B cell (primary cell): ENCODE measurements at regions of chr20 and their contacts with region 1.

Region 1: GRCh38 chr20:49821870-49822331 is 9.3 kb downstream of the SLC9A8 start:
- DNase-seq: no peak
- ATAC-seq: peak; percentile 36
- H3K4me3 ChIP-seq: no peak overlapping the region
- H3K4me3 Mint-ChIP-seq: peak overlapping the region; percentile 6
- H3K27ac ChIP-seq: peak overlapping the region in 1 of 2 donors; percentile 72
- H3K27ac Mint-ChIP-seq: peak overlapping the region; percentile 29
- H3K4me1 ChIP-seq: peaks cover 26 to 28% of the 10 kb centered on the region in 2 donors
- H3K4me1 Mint-ChIP-seq: peaks cover 34% of the 10 kb centered on the region
- H3K27me3 ChIP-seq: no peaks in the 10 kb centered on the region
- H3K27me3 Mint-ChIP-seq: no peaks in the 10 kb centered on the region
- CTCF ChIP-seq: no peak

Region 2: DNA sequence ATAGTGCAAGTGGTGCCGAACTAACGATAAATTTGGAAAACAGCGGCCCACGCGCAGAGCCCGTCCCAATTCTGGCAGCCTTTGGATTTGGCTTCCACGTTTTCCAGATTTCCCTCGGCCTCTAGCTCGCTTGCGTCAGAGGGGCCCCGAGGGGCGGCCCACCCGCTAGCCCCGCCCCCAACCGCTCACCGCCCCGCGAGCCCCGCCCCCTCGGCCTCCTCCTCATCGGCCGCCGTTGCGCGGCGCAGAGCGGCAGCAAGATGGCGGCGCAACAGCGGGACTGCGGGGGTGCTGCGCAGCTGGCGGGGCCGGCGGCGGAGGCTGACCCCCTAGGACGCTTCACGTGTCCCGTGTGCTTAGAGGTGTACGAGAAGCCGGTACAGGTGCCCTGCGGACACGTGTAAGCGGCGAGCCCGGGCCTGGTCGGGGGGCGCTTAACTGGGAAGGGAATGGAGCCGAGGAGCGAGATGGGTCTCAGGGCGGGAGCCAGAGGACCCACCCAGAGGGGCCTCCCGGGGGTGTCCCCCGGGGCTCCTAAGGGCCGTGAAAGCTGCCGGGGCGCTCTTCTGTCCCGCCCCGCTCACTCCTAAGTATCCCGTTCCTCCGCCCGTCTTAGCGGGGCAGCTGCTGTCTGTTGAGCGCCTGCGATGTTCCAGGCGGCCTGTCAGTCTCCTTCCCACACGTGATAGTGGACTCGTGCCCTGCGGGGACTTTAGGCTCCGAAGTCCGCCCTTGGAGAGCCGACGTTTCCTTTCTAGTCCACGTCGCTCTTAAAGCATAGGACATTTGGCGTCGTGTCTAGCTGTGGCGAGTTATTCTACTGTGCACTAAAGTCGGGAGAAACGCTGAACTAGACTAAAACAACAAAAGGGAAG is 114.5 kb after region 1 on chr20 and contains the start of gene RNF114:
- CTCF ChIA-PET with region 1: no interaction called
- POLR2A ChIA-PET with region 1: interaction called, 13 read pairs
- intact Hi-C with region 1: no loop called
- DNase-seq: peak; percentile 93
- ATAC-seq: peak; percentile 93
- H3K4me3 ChIP-seq: peak within 1 kb of the TSS; percentile 78 to 99 (median 94)
- H3K4me3 Mint-ChIP-seq: peak within 1 kb of the TSS; percentile 99
- H3K27ac ChIP-seq: peak within 1 kb of the TSS; percentile 89 to 90
- H3K27ac Mint-ChIP-seq: peak within 1 kb of the TSS; percentile 93
- H3K4me1 ChIP-seq: peaks cover 33 to 42% of the 10 kb centered on the region in 2 donors
- H3K4me1 Mint-ChIP-seq: peaks cover 49% of the 10 kb centered on the region
- H3K27me3 ChIP-seq: no peaks in the 10 kb centered on the region
- H3K27me3 Mint-ChIP-seq: no peaks in the 10 kb centered on the region
- CTCF ChIP-seq: no peak
- total RNA-seq, gene RNF114: 81.7 and 86.0 TPM in 2 replicates